GM12878 (cell line): ENCODE measurements at regions of chr3 and their contacts with region 1.

Region 1: GRCh38 chr3:131957511-131957910 is 77.3 kb downstream of the CPNE4 start:
- DNase-seq: no peak
- ATAC-seq: no peak
- H3K4me3 ChIP-seq: no peak overlapping the region
- H3K27ac ChIP-seq: no peak overlapping the region
- H3K4me1 ChIP-seq: no peaks in the 10 kb centered on the region
- H3K27me3 ChIP-seq: no peaks in the 10 kb centered on the region
- CTCF ChIP-seq: no peak
- EP300 ChIP-seq: no peak
- POLR2A ChIP-seq: no peak
- RAD21 ChIP-seq: no peak

Region 2: GRCh38 chr3:131018970-131019369 is 938.5 kb before region 1 on chr3:
- CTCF ChIA-PET with region 1: no interaction called
- POLR2A ChIA-PET with region 1: no interaction called
- RAD21 ChIA-PET with region 1: no interaction called
- SMC1A ChIA-PET with region 1: no interaction called
- in situ Hi-C with region 1: no loop called
- intact Hi-C with region 1: no loop called
- DNase-seq: no peak
- ATAC-seq: no peak
- H3K4me3 ChIP-seq: no peak overlapping the region
- H3K27ac ChIP-seq: no peak overlapping the region
- H3K4me1 ChIP-seq: no peaks in the 10 kb centered on the region
- H3K27me3 ChIP-seq: no peaks in the 10 kb centered on the region
- CTCF ChIP-seq: no peak
- EP300 ChIP-seq: no peak
- POLR2A ChIP-seq: no peak
- RAD21 ChIP-seq: no peak

Region 3: GRCh38 chr3:131973731-131974130 is 16.2 kb after region 1 on chr3:
- CTCF ChIA-PET with region 1: no interaction called
- POLR2A ChIA-PET with region 1: no interaction called
- RAD21 ChIA-PET with region 1: no interaction called
- SMC1A ChIA-PET with region 1: interaction called, 18 read pairs
- in situ Hi-C with region 1: no loop called
- intact Hi-C with region 1: no loop called
- DNase-seq: no peak
- ATAC-seq: no peak
- H3K4me3 ChIP-seq: no peak overlapping the region
- H3K27ac ChIP-seq: no peak overlapping the region
- H3K4me1 ChIP-seq: no peaks in the 10 kb centered on the region
- H3K27me3 ChIP-seq: no peaks in the 10 kb centered on the region
- CTCF ChIP-seq: no peak
- EP300 ChIP-seq: no peak
- POLR2A ChIP-seq: no peak
- RAD21 ChIP-seq: no peak

Region 4: GRCh38 chr3:132006605-132007204 is 49.2 kb after region 1 on chr3:
- CTCF ChIA-PET with region 1: no interaction called
- POLR2A ChIA-PET with region 1: no interaction called
- RAD21 ChIA-PET with region 1: no interaction called
- SMC1A ChIA-PET with region 1: no interaction called
- in situ Hi-C with region 1: no loop called
- intact Hi-C with region 1: no loop called
- DNase-seq: no peak
- ATAC-seq: peak; percentile 76
- H3K4me3 ChIP-seq: no peak overlapping the region
- H3K27ac ChIP-seq: no peak overlapping the region
- H3K4me1 ChIP-seq: no peaks in the 10 kb centered on the region
- H3K27me3 ChIP-seq: no peaks in the 10 kb centered on the region; a peak in 1 of 4 replicates
- CTCF ChIP-seq: peak; percentile 50 to 59 (median 56)
- EP300 ChIP-seq: no peak
- POLR2A ChIP-seq: no peak
- RAD21 ChIP-seq: no peak